ENCODE measurements at regions of chrX and their contacts with region 1.

Region 1: GRCh38 chrX:57583477-57583876 is 8.3 kb upstream of the ZXDB start:
- DNase-seq: no peak
- ATAC-seq: no peak
- H3K4me3 ChIP-seq: no peak overlapping the region
- H3K4me3 Mint-ChIP-seq: no peak overlapping the region
- H3K27ac ChIP-seq: no peak overlapping the region
- H3K27ac Mint-ChIP-seq: no peak overlapping the region
- H3K4me1 ChIP-seq: peaks cover 0 to 2% of the 10 kb centered on the region in 2 experiments
- H3K4me1 Mint-ChIP-seq: peaks cover 5 to 8% (median 7%) of the 10 kb centered on the region in 3 donors
- H3K27me3 ChIP-seq: no peaks in the 10 kb centered on the region
- H3K27me3 Mint-ChIP-seq: peaks cover 0 to 3% of the 10 kb centered on the region in 2 donors

Region 2: GRCh38 chrX:57286507-57287251 is 296.8 kb before region 1 on chrX and contains the start of gene FAAH2:
- CTCF ChIA-PET with region 1: interaction called in 1 of 2 experiments, 10 read pairs
- POLR2A ChIA-PET with region 1: no interaction called
- DNase-seq: peak; percentile 14 to 87 (median 74)
- ATAC-seq: peak; percentile 70 to 90 (median 76)
- H3K4me3 ChIP-seq: peak within 1 kb of the TSS; percentile 61 to 72
- H3K4me3 Mint-ChIP-seq: peak within 1 kb of the TSS; percentile 79 to 94 (median 84)
- H3K27ac ChIP-seq: peak within 1 kb of the TSS; percentile 85
- H3K27ac Mint-ChIP-seq: peak within 1 kb of the TSS; percentile 89 to 93
- H3K4me1 ChIP-seq: peaks cover 6 to 9% of the 10 kb centered on the region in 2 experiments
- H3K4me1 Mint-ChIP-seq: peaks cover 22 to 54% (median 31%) of the 10 kb centered on the region in 3 donors
- H3K27me3 ChIP-seq: no peaks in the 10 kb centered on the region
- H3K27me3 Mint-ChIP-seq: peaks cover 0 to 21% of the 10 kb centered on the region in 2 donors
- total RNA-seq, gene FAAH2: 7.5 to 14.4 (median 10.4) TPM